MCF 10A (cell line): ENCODE measurements at regions of chr4 and their contacts with region 1.

Region 1: DNA sequence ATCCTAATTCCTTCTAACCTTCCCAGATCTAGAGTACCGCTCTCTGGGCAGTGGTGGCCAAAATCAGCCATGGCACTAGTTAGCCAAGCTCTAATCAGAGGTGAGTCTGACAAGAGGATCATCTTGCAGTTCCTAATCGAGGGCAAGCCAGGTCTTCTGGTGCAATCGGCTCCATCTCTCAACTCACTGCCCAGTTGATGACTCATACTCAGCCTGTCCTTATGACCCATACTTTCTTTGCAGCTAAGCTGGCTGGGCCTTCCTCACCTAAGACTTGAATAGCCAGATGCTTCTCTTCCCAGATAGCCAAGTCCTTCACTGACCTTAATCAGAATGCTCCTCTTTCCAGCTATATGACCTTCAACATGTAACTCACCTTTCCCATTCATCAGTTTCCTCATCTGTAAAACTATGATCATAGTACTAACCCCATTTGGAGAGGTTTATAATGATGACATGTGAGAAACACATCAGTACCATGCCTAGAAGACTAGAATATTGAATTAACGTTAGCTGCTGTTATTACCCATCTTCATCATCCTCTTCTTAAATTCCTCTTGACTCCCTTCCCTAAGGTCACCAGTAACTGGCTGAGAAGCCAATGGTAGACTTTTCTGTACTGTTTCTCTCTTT is 57.1 kb downstream of the RELL1 start:
- DNase-seq: peak; percentile 86
- H3K4me3 Mint-ChIP-seq: no peak overlapping the region
- H3K27ac Mint-ChIP-seq: no peak overlapping the region
- H3K4me1 Mint-ChIP-seq: peaks cover 17% of the 10 kb centered on the region
- H3K27me3 Mint-ChIP-seq: no peaks in the 10 kb centered on the region
- CTCF ChIP-seq: no peak

Region 2: GRCh38 chr4:37584071-37584470 is 45.0 kb before region 1 on chr4:
- CTCF ChIA-PET with region 1: no interaction called
- POLR2A ChIA-PET with region 1: no interaction called
- intact Hi-C with region 1: no loop called
- DNase-seq: no peak
- H3K4me3 Mint-ChIP-seq: no peak overlapping the region
- H3K27ac Mint-ChIP-seq: no peak overlapping the region
- H3K4me1 Mint-ChIP-seq: no peaks in the 10 kb centered on the region
- H3K27me3 Mint-ChIP-seq: no peaks in the 10 kb centered on the region
- CTCF ChIP-seq: no peak

Region 3: DNA sequence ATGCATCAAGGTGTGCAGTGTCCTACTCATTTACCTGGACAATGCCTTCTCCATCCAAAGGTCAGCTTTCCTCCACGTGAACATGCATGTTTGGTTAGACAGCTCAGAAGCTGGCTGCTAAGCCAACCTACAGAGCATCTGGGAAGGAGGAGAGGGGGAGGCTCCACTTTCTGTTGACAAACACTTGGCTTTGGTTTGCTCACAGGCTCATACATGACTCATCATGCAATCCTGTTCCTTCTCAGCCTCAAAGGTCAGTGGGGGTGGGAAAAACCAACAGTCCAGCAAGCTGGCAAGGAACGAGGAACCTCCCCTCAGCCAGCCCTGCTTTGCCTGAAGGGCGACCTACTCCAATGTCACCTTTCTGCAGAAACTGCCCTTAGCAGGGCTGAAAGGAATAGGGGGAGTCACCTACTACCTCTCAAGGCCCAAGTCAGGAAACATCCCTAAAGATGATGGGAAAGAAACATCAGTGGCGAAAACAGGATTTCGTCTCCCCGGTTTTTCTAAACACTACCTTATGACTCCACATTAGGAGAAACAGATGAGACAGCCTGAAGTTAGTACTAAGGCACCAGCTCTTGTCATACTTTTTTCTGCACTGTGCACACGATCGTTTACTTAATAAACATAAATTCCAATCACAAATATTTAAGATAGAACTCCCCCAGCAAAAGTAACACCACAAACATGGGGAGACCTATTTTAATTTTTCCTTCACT is 19.2 kb after region 1 on chr4:
- CTCF ChIA-PET with region 1: no interaction called
- POLR2A ChIA-PET with region 1: interaction called, 3 read pairs
- intact Hi-C with region 1: loop called (anchors 2 kb)
- DNase-seq: peak; percentile 97
- H3K4me3 Mint-ChIP-seq: peak overlapping the region; percentile 52
- H3K27ac Mint-ChIP-seq: peak overlapping the region; percentile 81
- H3K4me1 Mint-ChIP-seq: peaks cover 5% of the 10 kb centered on the region
- H3K27me3 Mint-ChIP-seq: no peaks in the 10 kb centered on the region
- CTCF ChIP-seq: no peak

Region 4: GRCh38 chr4:37793562-37793961 is 164.5 kb after region 1 on chr4:
- CTCF ChIA-PET with region 1: no interaction called
- POLR2A ChIA-PET with region 1: no interaction called
- intact Hi-C with region 1: no loop called
- DNase-seq: peak; percentile 46
- H3K4me3 Mint-ChIP-seq: no peak overlapping the region
- H3K27ac Mint-ChIP-seq: no peak overlapping the region
- H3K4me1 Mint-ChIP-seq: no peaks in the 10 kb centered on the region
- H3K27me3 Mint-ChIP-seq: no peaks in the 10 kb centered on the region
- CTCF ChIP-seq: peak; percentile 71